RWPE1 (cell line): ENCODE measurements at regions of chr1 and their contacts with region 1.

Region 1: DNA sequence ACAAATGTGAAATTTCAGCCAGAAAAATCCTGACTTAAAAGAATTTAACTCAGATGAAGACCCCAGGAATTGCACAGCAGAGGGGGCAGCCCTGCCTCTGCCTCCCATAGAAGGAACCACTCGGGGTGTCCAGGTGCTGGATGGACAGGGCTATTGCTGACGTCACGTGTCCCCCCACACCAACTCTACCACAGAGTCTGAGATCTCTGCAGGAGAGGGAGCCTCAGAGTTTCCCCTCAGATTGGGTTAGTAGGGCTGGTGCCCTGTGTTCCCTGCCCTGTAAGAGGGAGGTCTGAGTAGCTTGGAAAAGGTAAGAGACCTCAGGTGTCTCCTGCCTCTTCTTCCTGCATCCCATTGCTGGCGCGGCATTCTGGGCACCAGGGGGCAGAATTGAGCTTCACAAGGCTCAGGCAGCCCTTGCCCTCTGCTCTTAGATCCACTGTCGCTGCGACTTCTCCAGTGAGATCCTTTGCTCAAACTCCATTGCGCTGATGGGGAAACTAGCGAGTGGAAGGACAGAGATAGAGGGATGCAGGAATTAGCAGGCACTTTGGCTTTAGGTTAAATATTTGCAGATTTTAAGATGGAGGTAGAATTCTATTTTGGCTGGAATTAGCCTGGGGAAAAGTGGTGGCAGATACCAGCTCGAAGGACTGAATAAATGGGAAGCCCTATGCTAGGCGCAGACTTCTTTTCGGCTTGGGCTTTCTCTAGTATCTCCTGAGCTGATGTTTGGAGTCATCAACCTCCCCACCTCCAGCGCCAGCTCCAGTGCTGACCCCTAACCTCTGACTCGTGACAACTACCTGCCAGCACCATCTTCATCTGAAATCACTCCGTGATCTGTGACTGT is 42.8 kb upstream of the DMBX1 start:
- DNase-seq: peak; percentile 57
- H3K27ac ChIP-seq: no peak overlapping the region
- CTCF ChIP-seq: peak; percentile 77

Region 2: GRCh38 chr1:46223472-46223943 is 223.4 kb before region 1 on chr1:
- CTCF ChIA-PET with region 1: no interaction called
- POLR2A ChIA-PET with region 1: no interaction called
- DNase-seq: peak; percentile 71
- H3K27ac ChIP-seq: peak overlapping the region; percentile 62
- CTCF ChIP-seq: peak; percentile 98

Region 3: DNA sequence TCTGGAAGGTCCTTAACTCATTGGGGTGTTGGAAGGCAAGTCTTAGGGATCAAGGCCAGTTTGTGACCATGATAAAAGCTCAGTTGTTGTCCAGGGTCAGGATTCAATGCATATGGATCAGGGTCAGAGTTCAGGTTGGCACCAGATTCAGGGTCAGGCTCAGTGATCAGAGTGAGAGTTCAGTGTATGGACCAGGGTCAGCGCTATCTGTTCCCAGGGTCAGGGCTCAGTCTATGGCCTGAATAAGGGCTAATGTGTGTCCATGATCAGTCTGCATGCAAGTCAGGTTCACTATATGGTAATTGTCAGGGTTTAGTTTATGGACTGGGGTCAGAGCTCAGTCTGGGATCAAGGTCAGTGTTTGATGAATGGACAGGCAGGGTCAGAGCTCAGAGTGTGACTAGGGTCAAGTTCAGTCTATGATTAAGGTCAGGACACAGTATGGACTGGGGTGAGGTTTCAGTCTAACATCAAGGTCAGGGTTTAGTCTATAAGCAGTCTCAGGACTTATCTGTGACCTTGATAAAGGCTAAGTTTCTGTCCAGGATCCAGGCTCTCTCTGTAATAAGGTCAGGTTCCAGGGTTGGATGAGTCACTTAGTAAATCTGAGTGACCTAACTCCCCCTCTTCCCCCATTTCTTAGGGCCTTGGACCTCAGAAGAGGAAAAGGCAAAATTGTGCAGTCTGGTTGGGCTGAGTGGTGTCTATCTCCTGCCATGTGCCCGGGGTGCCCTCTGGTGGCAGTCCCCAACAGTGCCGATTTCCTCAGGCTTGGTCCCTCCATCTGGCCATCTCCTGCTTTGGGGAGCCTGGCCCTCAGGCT is 80.8 kb after region 1 on chr1:
- CTCF ChIA-PET with region 1: interaction called, 23 read pairs
- POLR2A ChIA-PET with region 1: no interaction called
- DNase-seq: peak; percentile 80
- H3K27ac ChIP-seq: no peak overlapping the region
- CTCF ChIP-seq: peak; percentile 93

Region 4: DNA sequence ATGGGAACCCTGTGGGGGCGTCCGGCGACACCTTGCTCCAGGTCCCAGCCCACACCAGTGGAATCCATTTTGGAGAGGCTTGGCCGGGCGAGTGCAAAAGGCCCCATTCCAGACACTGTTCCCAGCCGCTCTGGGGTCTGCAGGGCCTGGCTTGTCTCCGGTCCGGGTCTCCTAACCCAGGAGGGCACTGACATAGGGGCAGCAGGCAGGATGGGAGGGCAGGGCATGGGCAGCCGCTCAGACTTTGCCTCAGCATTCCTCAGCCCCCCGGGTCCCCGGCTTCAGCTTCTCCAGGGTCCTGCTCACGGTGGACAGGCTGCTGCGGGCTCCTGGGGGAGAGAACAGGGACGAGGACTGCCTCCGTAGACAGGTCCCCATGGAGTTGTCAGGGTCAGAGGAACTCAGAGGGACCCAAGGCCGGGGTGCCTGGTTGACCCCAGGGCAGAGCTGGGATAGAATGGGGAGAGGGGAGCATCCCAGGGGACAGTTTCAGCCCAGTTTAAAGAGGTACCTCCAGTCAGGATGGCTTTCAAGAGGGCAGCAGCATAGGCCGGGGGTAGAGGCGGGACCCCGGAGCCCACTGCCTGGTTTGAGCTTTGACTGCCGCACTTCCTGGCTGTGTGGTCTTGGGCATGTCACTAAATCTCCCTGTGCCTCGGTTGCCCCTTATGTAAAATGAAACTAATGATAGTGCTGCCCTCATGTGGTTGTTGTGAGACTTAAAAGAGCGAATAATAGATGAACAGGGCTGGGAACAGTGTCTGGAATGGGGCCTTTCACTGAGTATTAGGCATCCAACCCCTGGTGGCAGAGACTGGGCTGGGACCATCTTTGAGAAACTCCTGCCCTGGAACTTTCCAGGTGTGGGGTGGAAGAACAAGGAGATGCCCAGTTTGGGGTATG is 100.9 kb after region 1 on chr1:
- CTCF ChIA-PET with region 1: interaction called, 18 read pairs
- POLR2A ChIA-PET with region 1: no interaction called
- DNase-seq: peak; percentile 57
- H3K27ac ChIP-seq: no peak overlapping the region
- CTCF ChIP-seq: peak; percentile 51